Activated CD8-positive, alpha-beta T cell treated with anti-CD3 and anti-CD28 coated beads for 36 hours (primary cell): ENCODE measurements at regions of chr16 and their contacts with region 1.

Region 1: DNA sequence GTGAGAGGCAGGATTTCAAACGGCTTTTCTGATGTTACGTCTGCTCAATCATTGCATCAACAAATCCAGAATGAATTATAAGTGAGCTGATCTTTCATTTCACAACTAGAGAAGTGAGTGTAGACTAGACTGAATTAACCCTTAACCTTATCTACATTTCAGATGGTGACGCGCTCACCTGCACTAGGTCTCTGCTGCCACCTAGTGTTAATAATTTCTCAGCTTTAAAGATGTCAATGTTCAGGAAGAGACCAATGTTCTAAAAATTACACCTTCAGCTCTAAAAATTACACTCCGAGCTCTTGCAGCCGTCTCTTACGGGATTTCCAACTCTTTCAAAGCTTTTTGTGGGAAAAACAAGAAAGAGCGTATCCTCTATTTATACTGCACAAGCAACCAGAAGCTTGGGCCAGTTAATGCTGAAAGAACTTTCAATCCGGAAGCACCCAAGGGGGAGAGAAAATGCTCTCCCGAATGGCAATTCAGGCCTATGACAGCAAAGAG is 88.2 kb upstream of the FA2H start:
- DNase-seq: peak; percentile 26
- ATAC-seq: peak; percentile 30
- H3K4me3 Mint-ChIP-seq: no peak overlapping the region
- H3K27ac Mint-ChIP-seq: no peak overlapping the region
- H3K4me1 Mint-ChIP-seq: peaks cover 7% of the 10 kb centered on the region
- H3K27me3 Mint-ChIP-seq: no peaks in the 10 kb centered on the region
- CTCF ChIP-seq: peak; percentile 83

Region 2: GRCh38 chr16:74709441-74709877 is 153.3 kb before region 1 on chr16:
- CTCF ChIA-PET with region 1: interaction called, 44 read pairs
- POLR2A ChIA-PET with region 1: no interaction called
- intact Hi-C with region 1: loop called (anchors 10 kb)
- DNase-seq: peak; percentile 84
- ATAC-seq: peak; percentile 99
- H3K4me3 Mint-ChIP-seq: no peak overlapping the region
- H3K27ac Mint-ChIP-seq: no peak overlapping the region
- H3K4me1 Mint-ChIP-seq: peaks cover 12% of the 10 kb centered on the region
- H3K27me3 Mint-ChIP-seq: no peaks in the 10 kb centered on the region
- CTCF ChIP-seq: peak; percentile 95

Region 3: GRCh38 chr16:74807052-74807646 is 55.6 kb before region 1 on chr16:
- CTCF ChIA-PET with region 1: interaction called, 60 read pairs
- POLR2A ChIA-PET with region 1: no interaction called
- intact Hi-C with region 1: loop called (anchors 5 kb)
- DNase-seq: no peak
- ATAC-seq: no peak
- H3K4me3 Mint-ChIP-seq: no peak overlapping the region
- H3K27ac Mint-ChIP-seq: no peak overlapping the region
- H3K4me1 Mint-ChIP-seq: no peaks in the 10 kb centered on the region
- H3K27me3 Mint-ChIP-seq: peaks cover 2% of the 10 kb centered on the region
- CTCF ChIP-seq: no peak

Region 4: DNA sequence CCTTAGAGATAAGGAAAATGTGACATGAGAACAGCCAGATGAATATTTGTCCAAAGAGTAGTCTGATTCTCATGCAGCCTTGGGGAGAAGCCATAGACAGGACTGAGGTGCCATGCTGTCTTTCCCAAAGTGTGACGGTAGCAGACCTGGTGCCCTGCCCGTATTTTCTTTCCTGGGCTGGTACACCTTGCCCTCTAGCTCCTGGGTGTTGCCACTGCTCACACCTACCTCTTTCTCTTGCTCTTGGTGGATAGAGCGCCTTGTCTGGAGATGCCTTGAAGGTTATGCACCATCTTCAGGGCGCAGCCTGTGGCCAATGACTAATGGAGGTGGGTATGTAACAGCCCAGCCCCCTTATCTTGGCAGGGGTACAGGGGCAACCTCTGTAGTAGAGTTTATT is 41.9 kb before region 1 on chr16:
- CTCF ChIA-PET with region 1: interaction called, 60 read pairs
- POLR2A ChIA-PET with region 1: no interaction called
- intact Hi-C with region 1: no loop called
- DNase-seq: no peak
- ATAC-seq: no peak
- H3K4me3 Mint-ChIP-seq: no peak overlapping the region
- H3K27ac Mint-ChIP-seq: no peak overlapping the region
- H3K4me1 Mint-ChIP-seq: no peaks in the 10 kb centered on the region
- H3K27me3 Mint-ChIP-seq: peaks cover 2% of the 10 kb centered on the region
- CTCF ChIP-seq: no peak

Region 5: DNA sequence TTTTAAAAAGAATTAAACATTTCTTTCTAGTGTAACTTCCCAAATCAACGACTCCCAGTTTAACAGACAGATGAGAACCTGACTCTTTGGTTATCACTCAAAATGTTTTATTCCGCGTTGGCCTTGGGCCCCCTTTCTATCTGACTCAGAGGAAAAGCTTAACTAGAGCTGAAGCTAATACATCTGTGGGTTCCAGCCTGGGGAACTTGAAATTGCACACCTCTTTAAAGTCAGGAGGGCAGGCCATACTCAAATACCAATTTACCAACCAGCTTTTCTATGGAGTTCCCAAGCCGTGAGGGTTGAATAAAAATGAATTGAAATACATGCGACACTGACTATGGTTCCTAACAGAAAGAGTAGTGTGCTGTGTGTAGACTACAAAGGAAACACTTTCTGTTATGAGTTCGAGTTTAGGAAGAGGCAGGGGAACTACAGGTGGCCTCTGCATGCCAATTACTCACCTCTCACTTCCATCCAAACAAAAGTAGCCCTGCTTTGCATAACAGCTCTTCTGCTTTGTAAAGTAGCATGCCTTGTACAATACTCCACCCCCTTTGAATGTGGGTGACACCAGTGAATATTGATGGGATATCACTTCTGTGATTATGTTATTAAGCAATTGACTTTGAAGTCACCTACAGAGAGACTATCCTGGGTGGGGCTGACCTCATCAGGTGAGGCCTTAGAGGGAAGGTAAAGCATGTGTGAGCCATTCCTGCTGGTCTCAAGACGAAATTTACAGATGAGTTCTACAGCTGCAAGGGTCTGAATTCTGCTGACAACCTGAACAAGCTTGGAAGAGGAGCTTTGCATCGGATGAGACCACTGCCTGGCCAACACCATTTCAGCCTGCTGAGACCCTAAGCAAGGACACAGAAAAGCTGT is 30.0 kb after region 1 on chr16:
- CTCF ChIA-PET with region 1: interaction called, 12 read pairs
- POLR2A ChIA-PET with region 1: no interaction called
- intact Hi-C with region 1: no loop called
- DNase-seq: no peak
- ATAC-seq: peak; percentile 24
- H3K4me3 Mint-ChIP-seq: no peak overlapping the region
- H3K27ac Mint-ChIP-seq: peak overlapping the region; percentile 49
- H3K4me1 Mint-ChIP-seq: no peaks in the 10 kb centered on the region
- H3K27me3 Mint-ChIP-seq: no peaks in the 10 kb centered on the region
- CTCF ChIP-seq: no peak